ENCODE measurements at regions of chr1 and their contacts with region 1.

Region 1: DNA sequence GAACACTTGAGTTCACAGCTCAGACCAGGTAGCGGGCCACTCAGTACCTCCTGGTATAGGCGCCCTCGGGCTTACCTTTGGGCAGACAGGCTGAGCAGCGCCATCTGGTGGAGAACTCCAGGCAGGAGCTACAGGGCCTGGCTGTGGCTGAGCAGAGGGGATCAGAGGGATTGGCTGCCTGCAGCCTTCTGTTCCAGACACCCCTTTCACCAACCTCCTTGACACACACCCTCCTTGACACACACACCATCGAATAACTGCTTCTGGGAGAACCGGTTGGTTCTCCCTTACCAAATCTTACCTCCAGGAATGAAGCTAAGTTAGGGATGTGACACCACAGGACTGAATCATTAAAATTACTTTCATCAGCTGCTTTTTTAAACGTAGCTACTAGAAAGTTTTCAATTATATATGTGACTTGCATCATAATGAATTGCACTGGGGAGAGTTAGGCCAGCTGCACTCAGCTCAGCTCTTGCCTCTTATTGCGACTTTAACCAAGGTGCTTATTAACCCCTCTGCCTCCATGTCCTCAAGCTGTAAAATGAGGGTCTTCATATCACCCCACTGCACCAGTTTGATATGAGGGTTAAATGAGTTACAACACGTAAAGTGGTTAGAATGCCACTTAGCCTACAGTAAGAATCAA is 6.6 kb downstream of the LIN28A start:
- DNase-seq: peak; percentile 76
- H3K4me3 Mint-ChIP-seq: no peak overlapping the region
- H3K27ac Mint-ChIP-seq: no peak overlapping the region
- H3K4me1 Mint-ChIP-seq: no peaks in the 10 kb centered on the region
- H3K27me3 Mint-ChIP-seq: peaks cover 65% of the 10 kb centered on the region
- CTCF ChIP-seq: peak; percentile 83

Region 2: GRCh38 chr1:26284597-26285360 is 132.5 kb before region 1 on chr1:
- CTCF ChIA-PET with region 1: interaction called, 16 read pairs
- POLR2A ChIA-PET with region 1: interaction called, 4 read pairs
- intact Hi-C with region 1: no loop called
- DNase-seq: peak; percentile 89
- H3K4me3 Mint-ChIP-seq: no peak overlapping the region
- H3K27ac Mint-ChIP-seq: peak overlapping the region; percentile 8
- H3K4me1 Mint-ChIP-seq: peaks cover 40% of the 10 kb centered on the region
- H3K27me3 Mint-ChIP-seq: no peaks in the 10 kb centered on the region
- CTCF ChIP-seq: peak; percentile 82

Region 3: GRCh38 chr1:26373281-26373680 is 44.0 kb before region 1 on chr1:
- CTCF ChIA-PET with region 1: interaction called, 16 read pairs
- POLR2A ChIA-PET with region 1: interaction called, 9 read pairs
- intact Hi-C with region 1: no loop called
- DNase-seq: no peak
- H3K4me3 Mint-ChIP-seq: no peak overlapping the region
- H3K27ac Mint-ChIP-seq: no peak overlapping the region
- H3K4me1 Mint-ChIP-seq: peaks cover 18% of the 10 kb centered on the region
- H3K27me3 Mint-ChIP-seq: no peaks in the 10 kb centered on the region
- CTCF ChIP-seq: no peak

Region 4: DNA sequence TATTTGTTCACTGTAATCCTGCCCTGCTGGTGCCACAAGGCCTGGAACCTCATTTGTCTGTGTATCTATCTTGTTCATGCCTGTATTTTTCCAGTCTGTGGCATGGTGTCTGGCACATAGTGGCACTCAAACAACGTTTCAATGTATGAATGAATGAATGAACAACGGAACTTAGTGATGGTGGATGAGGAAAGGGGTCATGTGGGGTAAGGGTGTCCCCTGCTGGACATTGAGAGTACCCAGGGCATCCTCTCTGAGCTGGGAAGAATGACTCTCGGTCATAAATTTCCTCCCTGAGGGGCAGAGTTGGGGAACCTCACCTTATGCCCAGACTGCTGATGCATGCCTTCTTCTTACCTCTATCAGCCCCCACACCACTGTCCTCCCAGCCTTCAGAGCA is 25.8 kb before region 1 on chr1:
- CTCF ChIA-PET with region 1: interaction called, 16 read pairs
- POLR2A ChIA-PET with region 1: no interaction called
- intact Hi-C with region 1: no loop called
- DNase-seq: peak; percentile 78
- H3K4me3 Mint-ChIP-seq: no peak overlapping the region
- H3K27ac Mint-ChIP-seq: no peak overlapping the region
- H3K4me1 Mint-ChIP-seq: peaks cover 14% of the 10 kb centered on the region
- H3K27me3 Mint-ChIP-seq: no peaks in the 10 kb centered on the region
- CTCF ChIP-seq: peak; percentile 91

Region 5: DNA sequence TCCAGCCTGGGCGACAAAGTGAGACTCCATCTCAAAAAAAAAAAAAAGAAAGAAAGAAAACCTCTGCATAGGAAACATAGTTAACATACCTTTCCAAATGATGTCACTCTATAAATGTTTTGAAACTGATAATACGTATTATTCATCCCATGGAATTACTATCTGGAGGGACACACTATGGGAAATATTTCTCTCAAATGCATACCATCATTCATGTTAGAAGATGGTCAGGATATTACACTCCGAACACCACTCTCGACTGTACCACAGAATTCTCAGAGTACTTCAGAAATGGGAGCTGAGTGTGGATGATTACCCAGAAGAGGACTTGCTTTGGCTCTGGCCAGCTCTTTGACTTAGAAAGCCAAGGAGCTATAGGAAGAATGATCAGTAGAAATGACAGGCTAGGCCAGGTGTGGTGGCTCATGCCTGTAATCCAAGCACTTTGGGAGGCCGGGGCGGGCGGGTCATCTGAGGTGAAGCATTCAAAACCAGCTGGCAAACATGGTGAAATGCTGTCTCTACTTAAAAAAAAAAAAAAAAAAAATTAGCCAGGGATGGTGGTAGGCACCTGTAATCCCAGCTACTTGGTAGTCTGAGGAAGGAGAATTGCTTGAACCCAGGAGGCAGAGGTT is 11.8 kb before region 1 on chr1:
- CTCF ChIA-PET with region 1: interaction called, 26 read pairs
- POLR2A ChIA-PET with region 1: interaction called, 3 read pairs
- intact Hi-C with region 1: no loop called
- DNase-seq: no peak
- H3K4me3 Mint-ChIP-seq: no peak overlapping the region
- H3K27ac Mint-ChIP-seq: no peak overlapping the region
- H3K4me1 Mint-ChIP-seq: peaks cover 13% of the 10 kb centered on the region
- H3K27me3 Mint-ChIP-seq: peaks cover 23% of the 10 kb centered on the region
- CTCF ChIP-seq: no peak

Region 6: GRCh38 chr1:26431979-26432695 is 14.9 kb after region 1 on chr1 and contains the start of gene DHDDS:
- CTCF ChIA-PET with region 1: interaction called, 23 read pairs
- POLR2A ChIA-PET with region 1: interaction called, 4 read pairs
- intact Hi-C with region 1: no loop called
- DNase-seq: peak; percentile 97
- H3K4me3 Mint-ChIP-seq: peak within 1 kb of the TSS; percentile 94
- H3K27ac Mint-ChIP-seq: peak within 1 kb of the TSS; percentile 88
- H3K4me1 Mint-ChIP-seq: peaks cover 12% of the 10 kb centered on the region
- H3K27me3 Mint-ChIP-seq: no peaks in the 10 kb centered on the region
- CTCF ChIP-seq: no peak
- total RNA-seq, gene DHDDS: 48.2 and 56.2 TPM in 2 replicates

Measured in MCF 10A (cell line).